ENCODE measurements at regions of chr4 and their contacts with region 1.

Region 1: DNA sequence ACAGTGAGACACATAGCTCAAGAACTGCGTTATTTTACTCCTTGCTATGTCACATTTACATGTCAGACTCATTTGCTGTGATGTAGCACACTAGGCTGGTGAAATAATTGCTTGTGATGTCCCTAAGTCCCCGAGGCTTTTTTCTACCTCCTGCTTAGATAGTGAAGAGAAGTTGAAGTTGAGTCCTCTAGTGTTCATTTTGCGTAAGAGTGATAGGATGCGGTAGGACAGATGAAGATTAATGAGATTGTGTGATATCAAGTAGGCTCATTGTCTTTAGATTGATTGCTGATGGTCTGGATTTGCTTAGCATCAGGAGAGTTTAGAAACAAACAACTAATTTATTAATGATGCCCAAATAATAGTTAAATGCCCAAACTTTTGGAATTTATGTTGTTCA is 173.6 kb upstream of the NUDT6 start:
- DNase-seq: peak in 1 of 2 experiments; percentile 43
- H3K4me3 ChIP-seq: no peak overlapping the region
- H3K4me1 ChIP-seq: peaks cover 3% of the 10 kb centered on the region; the same call in 1 of the 2 replicates
- H3K27me3 ChIP-seq: no peaks in the 10 kb centered on the region

Region 2: GRCh38 chr4:123802082-123802645 is 706.1 kb after region 1 on chr4:
- in situ Hi-C with region 1: no loop called
- DNase-seq: no peak
- H3K4me3 ChIP-seq: no peak overlapping the region
- H3K4me1 ChIP-seq: no peaks in the 10 kb centered on the region
- H3K27me3 ChIP-seq: no peaks in the 10 kb centered on the region

Region 3: GRCh38 chr4:124262211-124263179 is 1166.5 kb after region 1 on chr4:
- in situ Hi-C with region 1: loop called (anchors 25 kb)
- DNase-seq: peak; percentile 76 to 83
- H3K4me3 ChIP-seq: no peak overlapping the region
- H3K4me1 ChIP-seq: peaks cover 13% of the 10 kb centered on the region
- H3K27me3 ChIP-seq: no peaks in the 10 kb centered on the region